ENCODE measurements at regions of chr12 and their contacts with region 1.

Region 1: DNA sequence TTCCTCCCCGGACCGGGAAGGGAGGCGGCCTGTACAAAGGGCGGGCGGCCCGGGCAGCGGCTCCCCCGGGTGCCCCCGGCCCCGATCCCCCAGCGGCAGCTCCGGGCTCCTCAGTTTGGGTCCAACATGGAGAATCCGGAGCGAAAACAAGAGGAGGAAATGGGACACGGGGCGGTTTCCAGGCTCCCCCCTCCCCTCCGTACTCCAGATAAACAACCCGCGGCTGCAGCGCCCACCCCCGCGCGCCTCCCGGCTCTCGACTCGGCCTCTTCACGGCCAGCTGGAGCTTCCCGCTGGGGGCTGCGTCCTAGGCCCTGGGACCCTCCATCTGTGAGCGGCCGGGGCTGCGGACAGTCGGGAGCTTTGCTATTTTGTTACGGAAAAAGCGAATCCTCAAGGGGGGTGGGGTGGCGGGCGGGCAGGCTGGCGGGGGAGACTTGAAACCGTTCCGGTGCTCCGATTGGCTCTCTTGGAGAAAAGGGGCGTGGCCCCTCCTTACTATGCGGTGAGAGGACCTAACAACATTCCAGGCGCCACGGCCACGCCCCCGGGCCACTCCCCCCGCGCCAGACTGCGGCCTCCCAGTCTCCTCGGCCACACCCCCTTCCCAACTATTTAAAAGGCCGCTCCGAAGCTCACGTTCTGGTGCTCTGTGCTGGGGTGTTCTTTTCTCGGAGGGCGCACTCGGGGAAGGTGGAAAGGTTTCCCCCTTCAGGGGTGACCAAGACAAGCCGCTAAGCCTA is at the start of gene CTDSP2:
- DNase-seq: peak; percentile 99 to 100
- ATAC-seq: peak; percentile 89 to 95 (median 93)
- H3K4me3 ChIP-seq: peak within 1 kb of the TSS; percentile 77 to 100 (median 96)
- H3K27ac ChIP-seq: peak within 1 kb of the TSS; percentile 97 to 100 (median 100)
- H3K4me1 ChIP-seq: peaks cover 24 to 55% (median 41%) of the 10 kb centered on the region in 9 donors
- H3K27me3 ChIP-seq: peaks cover 0 to 5% (median 0%) of the 10 kb centered on the region in 7 donors
- CTCF ChIP-seq: peak in 2 of 9 donors; percentile 10 to 14
- total RNA-seq, gene CTDSP2: 76.4 to 138 (median 86.3) TPM

Region 2: GRCh38 chr12:57816855-57817151 is 29.9 kb before region 1 on chr12:
- intact Hi-C with region 1: loop called in 1 of 10 experiments (anchors 1 kb)
- DNase-seq: peak; percentile 40 to 65
- ATAC-seq: peak; percentile 62 to 90 (median 78)
- H3K4me3 ChIP-seq: no peak overlapping the region
- H3K27ac ChIP-seq: peak overlapping the region; percentile 42 to 86 (median 72)
- H3K4me1 ChIP-seq: peaks cover 15 to 61% (median 53%) of the 10 kb centered on the region in 9 donors
- H3K27me3 ChIP-seq: no peaks in the 10 kb centered on the region
- CTCF ChIP-seq: no peak

Region 3: GRCh38 chr12:57865090-57865751 is 18.5 kb after region 1 on chr12:
- intact Hi-C with region 1: loop called in 1 of 10 experiments (anchors 2 kb)
- DNase-seq: peak; percentile 77 to 84
- ATAC-seq: peak; percentile 86 to 94 (median 90)
- H3K4me3 ChIP-seq: peak overlapping the region; percentile 25 to 67 (median 58)
- H3K27ac ChIP-seq: peak overlapping the region; percentile 89 to 99 (median 96)
- H3K4me1 ChIP-seq: peaks cover 6 to 29% (median 19%) of the 10 kb centered on the region in 9 donors
- H3K27me3 ChIP-seq: no peaks in the 10 kb centered on the region
- CTCF ChIP-seq: peak in 1 of 9 donors; percentile 9

Region 4: DNA sequence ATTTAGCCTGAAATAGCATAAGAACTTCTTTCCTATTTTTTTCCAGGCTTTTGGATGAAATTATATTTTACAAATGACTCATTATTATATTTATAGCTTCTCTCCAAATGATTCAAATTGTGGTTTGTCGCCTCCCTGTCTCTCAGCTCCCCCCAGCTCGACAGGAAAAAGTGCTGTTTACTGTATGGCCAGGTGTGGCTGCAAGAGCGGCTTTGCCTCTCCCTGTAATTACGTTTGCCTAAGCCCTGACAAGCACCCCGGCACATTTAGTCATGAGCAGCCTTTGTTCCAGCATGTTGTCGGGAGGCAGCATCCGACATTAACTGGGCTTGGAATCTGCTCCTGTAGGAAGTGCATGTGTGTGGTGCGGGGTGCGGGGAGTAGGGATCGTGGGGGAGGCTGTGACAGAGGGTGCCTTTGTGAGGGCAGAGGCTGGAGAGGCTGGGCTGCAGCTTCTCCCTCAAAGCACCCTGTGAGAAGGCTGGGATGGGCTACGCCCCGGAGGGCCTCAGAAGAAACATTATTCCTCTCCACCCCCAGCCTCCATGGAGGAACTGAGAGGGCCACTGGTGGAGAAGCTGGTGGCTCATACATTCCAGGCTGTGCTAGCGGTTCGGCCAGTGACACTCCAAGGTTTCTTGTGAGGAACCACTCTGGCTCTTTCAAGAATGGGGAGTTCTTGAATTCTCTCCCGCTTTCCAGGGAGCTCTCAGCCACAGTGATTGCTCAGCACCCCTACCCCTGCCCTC is 41.8 kb after region 1 on chr12:
- intact Hi-C with region 1: loop called in 2 of 10 experiments (anchors 2 kb)
- DNase-seq: peak in 1 of 2 donors; percentile 40
- ATAC-seq: peak in 7 of 8 donors; percentile 3 to 46 (median 24)
- H3K4me3 ChIP-seq: peak overlapping the region in 6 of 10 donors; percentile 22 to 42 (median 36)
- H3K27ac ChIP-seq: peak overlapping the region; percentile 64 to 100 (median 98)
- H3K4me1 ChIP-seq: peaks cover 25 to 71% (median 63%) of the 10 kb centered on the region in 9 donors
- H3K27me3 ChIP-seq: no peaks in the 10 kb centered on the region
- CTCF ChIP-seq: no peak

Region 5: DNA sequence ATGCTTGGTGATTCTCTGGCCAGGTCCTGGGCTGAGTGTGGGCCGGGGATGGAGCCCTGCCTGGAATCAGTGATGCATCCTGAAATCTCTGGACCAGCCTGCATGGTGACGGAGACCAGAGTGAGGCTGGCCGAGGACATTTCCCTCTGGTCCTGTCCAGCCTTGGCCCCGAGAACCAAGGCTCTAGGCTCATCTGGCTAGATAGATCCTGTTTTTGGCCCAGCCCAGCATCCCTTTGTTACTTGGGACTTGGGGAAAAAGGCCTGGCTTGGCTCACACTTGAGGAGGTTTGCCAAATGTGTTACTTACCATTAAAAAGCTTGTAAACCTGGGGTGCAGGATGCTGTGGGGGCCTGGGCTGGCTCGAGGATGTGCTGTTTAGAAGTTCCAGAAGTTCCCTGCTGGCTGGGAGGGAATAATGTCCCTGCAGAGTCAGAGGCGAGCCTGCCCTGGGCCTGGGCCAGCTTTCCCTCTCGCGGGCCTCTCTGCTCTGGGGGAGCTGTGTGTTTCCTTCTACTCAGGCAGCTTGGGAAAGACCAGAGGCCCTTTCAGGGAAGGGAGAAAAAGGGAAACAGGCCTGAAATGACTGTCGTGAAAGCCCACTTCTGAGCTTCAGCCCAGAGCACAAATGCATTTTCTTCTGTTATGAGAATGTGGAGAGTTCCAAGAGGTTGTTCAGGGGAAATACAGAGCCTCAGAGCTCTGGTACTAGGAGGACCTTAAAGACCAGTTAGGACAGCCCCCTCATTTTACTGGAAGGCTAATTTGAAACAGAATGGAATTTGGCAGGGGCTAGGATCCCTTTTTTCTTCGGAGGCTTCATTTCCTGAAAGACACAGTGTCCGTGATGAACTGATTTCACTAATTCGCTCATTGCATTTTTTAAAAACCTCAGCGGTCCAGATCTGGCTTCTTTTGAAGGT is 46.9 kb after region 1 on chr12:
- intact Hi-C with region 1: loop called in 5 of 10 experiments (anchors 1 to 2 kb)
- DNase-seq: peak; percentile 93 to 95
- ATAC-seq: peak; percentile 74 to 83 (median 77)
- H3K4me3 ChIP-seq: peak overlapping the region in 7 of 10 donors; percentile 0 to 30 (median 9)
- H3K27ac ChIP-seq: peak overlapping the region; percentile 92 to 100 (median 98)
- H3K4me1 ChIP-seq: peaks cover 32 to 100% (median 93%) of the 10 kb centered on the region in 9 donors
- H3K27me3 ChIP-seq: no peaks in the 10 kb centered on the region
- CTCF ChIP-seq: peak in 5 of 9 donors; percentile 10 to 44 (median 20)

Region 6: GRCh38 chr12:58425481-58426392 is 579.0 kb after region 1 on chr12:
- intact Hi-C with region 1: no loop called
- DNase-seq: no peak
- ATAC-seq: peak in 2 of 8 donors; percentile 39 to 52
- H3K4me3 ChIP-seq: no peak overlapping the region
- H3K27ac ChIP-seq: peak overlapping the region in 2 of 10 donors; percentile 38 to 62
- H3K4me1 ChIP-seq: peaks cover 0 to 21% (median 10%) of the 10 kb centered on the region in 9 donors
- H3K27me3 ChIP-seq: no peaks in the 10 kb centered on the region
- CTCF ChIP-seq: no peak